Dendritic cell treated with granulocyte-macrophage colony-stimulating factor and Interleukin-4, amounts not matched to agents 40 ng/mL and 50 ng/mL, for 4 days (primary cell): ENCODE measurements at regions of chr4 and their contacts with region 1.

Region 1: GRCh38 chr4:105128208-105128607 is 18.5 kb upstream of the TET2 start:
- H3K4me3 Mint-ChIP-seq: no peak overlapping the region
- H3K27ac Mint-ChIP-seq: peak overlapping the region; percentile 90
- H3K4me1 Mint-ChIP-seq: peaks cover 32% of the 10 kb centered on the region
- H3K27me3 Mint-ChIP-seq: no peaks in the 10 kb centered on the region

Region 2: GRCh38 chr4:105113800-105114199 is 14.4 kb before region 1 on chr4:
- intact Hi-C with region 1: loop called (anchors 2 kb)
- H3K4me3 Mint-ChIP-seq: no peak overlapping the region
- H3K27ac Mint-ChIP-seq: peak overlapping the region; percentile 81
- H3K4me1 Mint-ChIP-seq: peaks cover 34% of the 10 kb centered on the region
- H3K27me3 Mint-ChIP-seq: no peaks in the 10 kb centered on the region

Region 3: GRCh38 chr4:105146276-105147015 is 18.2 kb after region 1 on chr4 and contains the start of gene TET2:
- intact Hi-C with region 1: no loop called
- H3K4me3 Mint-ChIP-seq: peak within 1 kb of the TSS; percentile 89
- H3K27ac Mint-ChIP-seq: peak within 1 kb of the TSS; percentile 100
- H3K4me1 Mint-ChIP-seq: peaks cover 54% of the 10 kb centered on the region
- H3K27me3 Mint-ChIP-seq: no peaks in the 10 kb centered on the region

Region 4: DNA sequence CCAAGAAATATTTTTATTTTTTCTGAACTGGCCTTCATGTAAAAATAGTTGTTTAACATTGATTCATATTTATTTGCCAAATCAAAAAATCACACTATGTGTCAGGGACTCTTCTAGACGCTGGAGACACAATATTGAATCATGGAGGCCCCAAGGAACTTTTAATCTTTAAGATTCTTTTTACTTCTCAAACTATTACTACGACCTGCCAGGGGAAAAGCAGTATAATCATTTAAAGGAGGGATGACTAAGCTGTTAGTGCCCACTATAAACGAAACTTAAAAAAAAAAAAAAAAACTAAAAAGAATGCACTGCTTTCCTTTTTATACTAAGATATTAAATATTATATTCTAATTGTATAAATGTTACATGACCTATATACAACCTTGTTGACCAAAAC is 261.0 kb after region 1 on chr4:
- intact Hi-C with region 1: no loop called
- H3K4me3 Mint-ChIP-seq: no peak overlapping the region
- H3K27ac Mint-ChIP-seq: no peak overlapping the region
- H3K4me1 Mint-ChIP-seq: no peaks in the 10 kb centered on the region
- H3K27me3 Mint-ChIP-seq: no peaks in the 10 kb centered on the region